Testis (tissue), 5 donors: ENCODE measurements at regions of chr11 and their contacts with region 1.

Region 1: DNA sequence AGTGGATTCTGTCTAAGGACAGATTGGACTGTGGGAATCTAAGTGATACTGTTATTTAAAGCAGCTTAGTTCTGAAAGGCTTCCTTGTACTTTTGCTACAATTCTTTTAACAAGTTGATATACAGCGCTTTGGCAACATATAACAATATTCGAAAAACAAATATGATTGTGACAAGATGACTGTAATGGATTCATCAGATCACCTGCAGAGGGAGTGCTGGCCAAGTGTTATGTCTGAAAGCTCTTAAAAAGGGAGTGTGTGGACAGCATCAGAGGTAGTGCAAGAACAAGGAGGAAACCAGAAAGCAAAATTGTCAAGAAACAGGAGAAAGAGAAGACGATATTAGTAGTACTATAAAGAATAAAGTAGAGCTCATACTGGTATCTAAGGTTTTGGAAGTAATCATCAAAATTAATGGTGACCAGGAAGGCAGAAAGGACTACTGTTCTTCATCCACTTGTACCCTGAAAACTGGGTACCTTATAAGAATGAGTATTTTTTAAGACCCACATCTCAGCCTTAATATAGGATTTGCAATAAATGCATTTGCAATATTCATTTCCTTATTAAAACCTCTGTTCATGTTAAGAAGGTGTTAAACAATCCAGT is 1112.0 kb upstream of the CCDC90B start:
- DNase-seq: peak; percentile 63
- H3K4me3 ChIP-seq: no peak overlapping the region
- H3K27ac ChIP-seq: no peak overlapping the region
- H3K4me1 ChIP-seq: no peaks in the 10 kb centered on the region
- H3K27me3 ChIP-seq: no peaks in the 10 kb centered on the region
- CTCF ChIP-seq: peak in 2 of 3 experiments; percentile 27 to 44
- POLR2A ChIP-seq: no peak

Region 2: DNA sequence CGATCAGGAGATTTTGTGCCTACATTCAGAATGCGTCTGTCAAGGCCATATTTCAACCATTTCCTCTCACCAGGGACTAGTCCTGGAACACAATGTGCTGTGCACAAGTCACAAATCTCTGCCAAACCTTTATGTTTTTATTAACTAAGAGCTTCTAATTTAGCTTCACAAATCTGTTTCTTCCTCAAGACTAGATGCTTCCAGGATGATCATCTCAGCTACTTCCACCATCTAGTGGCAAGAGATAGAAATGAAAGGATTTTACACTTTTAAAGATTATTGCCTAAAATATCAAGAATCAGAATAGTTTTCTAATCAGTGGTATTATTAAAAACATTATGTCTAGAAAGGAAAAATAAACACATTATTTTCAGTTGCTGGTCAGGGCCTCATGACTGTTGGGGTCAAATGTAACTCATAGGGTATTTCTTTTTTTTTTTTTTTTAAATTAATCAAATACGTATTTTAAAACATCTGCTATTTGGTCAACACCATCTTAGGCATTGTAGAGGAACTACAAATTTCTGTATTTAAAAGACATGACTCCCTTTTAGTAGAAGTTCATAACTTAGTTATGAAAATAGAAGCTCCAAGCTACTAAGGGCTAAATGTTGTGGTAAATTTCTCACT is 126.4 kb after region 1 on chr11:
- intact Hi-C with region 1: loop called (anchors 10 kb)
- DNase-seq: peak; percentile 32
- H3K4me3 ChIP-seq: no peak overlapping the region
- H3K27ac ChIP-seq: peak overlapping the region in 1 of 2 donors; percentile 8
- H3K4me1 ChIP-seq: peaks cover 13% of the 10 kb centered on the region
- H3K27me3 ChIP-seq: no peaks in the 10 kb centered on the region
- CTCF ChIP-seq: peak; percentile 60 to 70 (median 65)
- POLR2A ChIP-seq: no peak

Region 3: GRCh38 chr11:84580428-84580827 is 182.3 kb after region 1 on chr11:
- intact Hi-C with region 1: no loop called
- DNase-seq: no peak
- H3K4me3 ChIP-seq: no peak overlapping the region
- H3K27ac ChIP-seq: no peak overlapping the region
- H3K4me1 ChIP-seq: no peaks in the 10 kb centered on the region
- H3K27me3 ChIP-seq: no peaks in the 10 kb centered on the region
- CTCF ChIP-seq: no peak
- POLR2A ChIP-seq: no peak